ENCODE measurements at regions of chr18 and their contacts with region 1.

Region 1: GRCh38 chr18:12659904-12660605 is 2.1 kb upstream of the SPIRE1 start:
- DNase-seq: peak; percentile 66
- ATAC-seq: peak; percentile 62

Region 2: GRCh38 chr18:12391618-12392165 is 268.4 kb before region 1 on chr18:
- intact Hi-C with region 1: loop called (anchors 5 kb)
- DNase-seq: peak; percentile 78
- ATAC-seq: peak; percentile 96

Region 3: GRCh38 chr18:12540751-12541150 is 119.3 kb before region 1 on chr18:
- intact Hi-C with region 1: no loop called
- DNase-seq: no peak
- ATAC-seq: no peak

Region 4: DNA sequence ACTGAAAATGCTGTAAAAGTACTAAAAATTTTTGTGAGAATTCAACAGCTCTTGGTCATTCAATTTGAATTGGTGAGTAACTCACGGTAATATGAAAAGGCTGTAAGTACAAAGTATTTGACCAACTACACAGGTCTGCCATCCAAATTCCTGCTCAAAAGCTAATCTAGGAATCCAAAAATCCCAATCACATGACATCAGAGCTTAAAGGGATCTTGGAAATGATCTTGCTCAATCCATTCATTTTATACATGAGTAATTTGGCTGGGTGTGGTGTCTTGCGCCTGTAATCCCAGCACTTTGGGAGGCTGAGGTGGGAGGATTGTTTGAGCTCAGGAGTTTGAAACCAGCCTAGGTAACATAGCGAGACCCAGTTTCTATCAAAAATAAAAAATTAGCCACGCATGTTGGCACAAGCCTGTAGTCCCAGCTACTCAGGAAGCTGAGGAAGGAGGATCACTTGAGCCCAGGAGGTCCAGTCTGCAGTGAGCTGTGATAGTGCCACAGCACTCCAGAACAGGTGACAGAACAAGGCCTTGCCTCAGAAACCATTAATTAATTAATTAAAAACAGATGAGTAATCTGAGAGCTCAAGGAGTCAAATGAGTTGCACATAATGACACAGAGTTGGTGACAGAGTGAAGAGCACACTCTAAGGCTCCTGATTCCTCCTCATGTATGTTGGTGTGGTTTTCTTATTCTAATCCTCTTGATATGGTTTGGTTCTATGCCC is 22.0 kb before region 1 on chr18:
- intact Hi-C with region 1: no loop called
- DNase-seq: no peak
- ATAC-seq: no peak

Region 5: GRCh38 chr18:12703664-12704063 is 43.6 kb after region 1 on chr18:
- intact Hi-C with region 1: no loop called
- DNase-seq: no peak
- ATAC-seq: no peak